ENCODE measurements at regions of chr5 and their contacts with region 1.

Region 1: GRCh38 chr5:146273109-146273508 is 65.5 kb upstream of the POU4F3 start:
- DNase-seq: no peak
- H3K4me3 ChIP-seq: no peak overlapping the region
- H3K4me3 Mint-ChIP-seq: no peak overlapping the region
- H3K27ac ChIP-seq: no peak overlapping the region
- H3K27ac Mint-ChIP-seq: no peak overlapping the region
- H3K4me1 ChIP-seq: no peaks in the 10 kb centered on the region
- H3K4me1 Mint-ChIP-seq: no peaks in the 10 kb centered on the region
- H3K27me3 ChIP-seq: no peaks in the 10 kb centered on the region
- H3K27me3 Mint-ChIP-seq: no peaks in the 10 kb centered on the region
- CTCF ChIP-seq: no peak

Region 2: GRCh38 chr5:145936401-145937131 is 336.5 kb before region 1 on chr5 and contains the start of gene SH3RF2:
- intact Hi-C with region 1: no loop called
- DNase-seq: no peak
- H3K4me3 ChIP-seq: no peak within 1 kb of the TSS
- H3K4me3 Mint-ChIP-seq: peak within 1 kb of the TSS in 1 of 2 donors; percentile 40
- H3K27ac ChIP-seq: no peak within 1 kb of the TSS
- H3K27ac Mint-ChIP-seq: no peak within 1 kb of the TSS
- H3K4me1 ChIP-seq: no peaks in the 10 kb centered on the region
- H3K4me1 Mint-ChIP-seq: peaks cover 11% of the 10 kb centered on the region
- H3K27me3 ChIP-seq: peaks cover 41 to 56% of the 10 kb centered on the region in 2 donors
- H3K27me3 Mint-ChIP-seq: peaks cover 29 to 67% (median 60%) of the 10 kb centered on the region in 3 donors
- CTCF ChIP-seq: no peak
- polyA plus RNA-seq, gene SH3RF2: not detected

Region 3: DNA sequence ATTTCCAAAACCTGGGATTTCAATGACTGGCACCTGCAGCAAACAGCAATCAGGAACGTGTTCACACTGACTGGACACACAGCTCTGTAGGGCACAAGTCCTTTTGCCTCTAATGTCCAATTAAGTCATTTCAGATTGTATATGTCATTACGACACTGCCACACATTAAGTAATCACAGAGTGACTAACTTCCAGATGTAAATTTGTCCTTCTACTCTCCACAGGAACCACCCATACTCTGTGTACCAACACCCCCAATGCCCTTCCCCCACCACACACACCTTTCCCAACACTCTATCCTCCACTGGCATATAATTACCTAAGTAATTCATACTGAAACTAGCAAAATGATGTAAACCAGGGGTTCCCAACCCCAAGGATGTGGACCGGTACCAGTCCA is 121.1 kb before region 1 on chr5:
- intact Hi-C with region 1: loop called in 1 of 2 experiments (anchors 10 kb)
- DNase-seq: peak in 1 of 3 donors; percentile 3
- H3K4me3 ChIP-seq: no peak overlapping the region
- H3K4me3 Mint-ChIP-seq: no peak overlapping the region
- H3K27ac ChIP-seq: peak overlapping the region in 1 of 2 donors; percentile 28
- H3K27ac Mint-ChIP-seq: peak overlapping the region in 2 of 7 donors; percentile 6 to 57
- H3K4me1 ChIP-seq: peaks cover 0 to 4% of the 10 kb centered on the region in 2 donors
- H3K4me1 Mint-ChIP-seq: peaks cover 3% of the 10 kb centered on the region
- H3K27me3 ChIP-seq: no peaks in the 10 kb centered on the region
- H3K27me3 Mint-ChIP-seq: no peaks in the 10 kb centered on the region
- CTCF ChIP-seq: no peak

Region 4: DNA sequence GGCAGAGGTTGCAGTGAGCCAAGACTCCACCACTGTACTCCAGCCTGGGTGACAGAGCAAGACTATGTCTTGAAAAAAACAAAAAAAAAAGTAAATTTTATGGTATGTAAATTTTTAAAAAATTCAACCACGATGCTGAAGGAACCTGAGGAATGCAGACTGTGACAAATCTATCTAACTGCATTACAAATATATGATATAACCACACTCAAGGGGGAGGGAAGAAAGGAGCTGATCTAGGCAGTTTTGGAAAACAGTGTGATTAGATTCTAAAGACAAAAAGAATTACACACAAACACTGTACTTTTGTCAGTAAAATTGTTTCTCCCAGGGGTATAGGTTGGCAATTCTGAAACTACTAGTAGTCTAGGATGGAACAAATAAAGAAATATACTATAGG is 107.6 kb before region 1 on chr5:
- intact Hi-C with region 1: loop called in 1 of 2 experiments (anchors 10 kb)
- DNase-seq: no peak
- H3K4me3 ChIP-seq: no peak overlapping the region
- H3K4me3 Mint-ChIP-seq: no peak overlapping the region
- H3K27ac ChIP-seq: no peak overlapping the region
- H3K27ac Mint-ChIP-seq: no peak overlapping the region
- H3K4me1 ChIP-seq: no peaks in the 10 kb centered on the region
- H3K4me1 Mint-ChIP-seq: no peaks in the 10 kb centered on the region
- H3K27me3 ChIP-seq: no peaks in the 10 kb centered on the region
- H3K27me3 Mint-ChIP-seq: peaks cover 0 to 1% (median 0%) of the 10 kb centered on the region in 3 donors
- CTCF ChIP-seq: no peak

Region 5: GRCh38 chr5:146475190-146475801 is 202.2 kb after region 1 on chr5:
- intact Hi-C with region 1: loop called in 1 of 2 experiments (anchors 10 kb)
- DNase-seq: no peak
- H3K4me3 ChIP-seq: no peak overlapping the region
- H3K4me3 Mint-ChIP-seq: no peak overlapping the region
- H3K27ac ChIP-seq: peak overlapping the region in 1 of 2 donors; percentile 47
- H3K27ac Mint-ChIP-seq: peak overlapping the region in 1 of 7 donors; percentile 0
- H3K4me1 ChIP-seq: peaks cover 15 to 17% of the 10 kb centered on the region in 2 donors
- H3K4me1 Mint-ChIP-seq: peaks cover 12% of the 10 kb centered on the region
- H3K27me3 ChIP-seq: no peaks in the 10 kb centered on the region
- H3K27me3 Mint-ChIP-seq: no peaks in the 10 kb centered on the region
- CTCF ChIP-seq: no peak